ENCODE measurements at regions of chr14 and their contacts with region 1.

Region 1: GRCh38 chr14:74913986-74914573 is 9.0 kb downstream of the RPS6KL1 start:
- DNase-seq: peak; percentile 62
- H3K4me3 Mint-ChIP-seq: no peak overlapping the region
- H3K27ac Mint-ChIP-seq: no peak overlapping the region
- H3K4me1 Mint-ChIP-seq: peaks cover 14% of the 10 kb centered on the region
- H3K27me3 Mint-ChIP-seq: no peaks in the 10 kb centered on the region
- CTCF ChIP-seq: peak; percentile 61

Region 2: DNA sequence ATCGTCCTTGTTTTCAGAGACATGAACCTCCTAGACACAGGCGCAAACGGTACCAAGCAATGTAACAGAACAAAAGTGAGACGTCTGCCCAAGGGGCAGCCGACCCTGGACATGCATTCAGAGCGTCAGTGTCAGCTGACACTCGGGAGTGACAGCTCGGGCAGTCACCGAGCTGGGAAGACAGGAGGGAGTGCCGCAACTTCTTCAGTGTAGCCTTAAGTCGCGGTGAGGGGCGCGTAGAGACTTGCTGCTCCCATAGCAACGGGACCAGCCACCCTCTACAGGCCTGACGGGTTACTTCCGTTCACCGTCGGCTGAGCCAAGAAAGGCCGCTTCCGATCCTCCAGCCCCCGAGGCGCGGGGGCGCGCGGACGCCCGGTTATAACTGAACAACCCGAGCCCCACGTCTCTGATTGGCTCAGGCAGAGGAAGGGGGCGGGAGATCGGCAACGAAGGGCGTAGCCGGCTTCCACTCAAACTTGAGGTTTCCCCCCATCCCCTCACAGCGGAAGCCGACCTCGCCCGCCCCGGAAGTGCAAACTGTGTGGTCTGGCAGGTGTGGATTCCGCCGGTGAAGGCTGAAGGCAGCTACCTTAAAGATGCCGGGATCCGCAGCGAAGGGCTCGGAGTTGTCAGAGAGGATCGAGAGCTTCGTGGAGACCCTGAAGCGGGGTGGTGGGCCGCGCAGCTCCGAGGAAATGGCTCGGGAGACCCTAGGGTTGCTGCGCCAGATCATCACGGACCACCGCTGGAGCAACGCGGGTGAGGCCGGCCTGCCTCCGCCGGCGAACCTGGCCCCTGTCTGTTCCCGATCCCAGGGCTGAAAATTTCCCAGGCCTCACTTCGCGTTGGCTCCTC is 88.5 kb after region 1 on chr14 and contains the start of gene EIF2B2:
- CTCF ChIA-PET with region 1: no interaction called
- intact Hi-C with region 1: loop called (anchors 1 kb)
- DNase-seq: peak; percentile 98
- H3K4me3 Mint-ChIP-seq: peak within 1 kb of the TSS; percentile 85
- H3K27ac Mint-ChIP-seq: peak within 1 kb of the TSS; percentile 77
- H3K4me1 Mint-ChIP-seq: peaks cover 28% of the 10 kb centered on the region
- H3K27me3 Mint-ChIP-seq: no peaks in the 10 kb centered on the region
- CTCF ChIP-seq: no peak
- total RNA-seq, gene EIF2B2: 41.2 and 42.9 TPM in 2 replicates

Measured in Calu3 (cell line).